Posterior vena cava (tissue), 2 donors: ENCODE measurements at regions of chr14 and their contacts with region 1.

Region 1: DNA sequence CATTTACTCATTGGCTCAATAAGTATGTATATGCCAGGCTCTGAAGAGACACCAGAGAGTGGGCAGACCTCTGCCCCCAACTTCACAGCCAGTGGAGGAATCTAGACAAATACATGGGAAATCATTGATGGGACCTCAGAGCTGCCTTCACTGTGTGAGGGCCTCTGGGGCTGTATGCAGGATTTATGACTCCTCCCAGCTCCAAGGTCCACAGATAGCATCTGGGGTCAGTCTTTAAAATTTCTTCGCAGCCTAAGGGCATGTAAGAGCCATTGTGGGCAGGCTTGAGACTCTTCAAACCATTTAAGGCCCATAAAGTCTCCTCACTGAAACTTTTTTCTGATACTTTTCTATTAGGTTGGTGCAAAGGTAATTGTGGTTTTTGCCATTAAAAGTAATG is 125.5 kb downstream of the SPTSSA start:
- DNase-seq: no peak

Region 2: GRCh38 chr14:34049790-34050189 is 286.7 kb before region 1 on chr14:
- intact Hi-C with region 1: loop called in 1 of 2 experiments (anchors 5 kb)
- DNase-seq: no peak